Esophagus muscularis mucosa (tissue), 4 donors: ENCODE measurements at regions of chrX and their contacts with region 1.

Region 1: DNA sequence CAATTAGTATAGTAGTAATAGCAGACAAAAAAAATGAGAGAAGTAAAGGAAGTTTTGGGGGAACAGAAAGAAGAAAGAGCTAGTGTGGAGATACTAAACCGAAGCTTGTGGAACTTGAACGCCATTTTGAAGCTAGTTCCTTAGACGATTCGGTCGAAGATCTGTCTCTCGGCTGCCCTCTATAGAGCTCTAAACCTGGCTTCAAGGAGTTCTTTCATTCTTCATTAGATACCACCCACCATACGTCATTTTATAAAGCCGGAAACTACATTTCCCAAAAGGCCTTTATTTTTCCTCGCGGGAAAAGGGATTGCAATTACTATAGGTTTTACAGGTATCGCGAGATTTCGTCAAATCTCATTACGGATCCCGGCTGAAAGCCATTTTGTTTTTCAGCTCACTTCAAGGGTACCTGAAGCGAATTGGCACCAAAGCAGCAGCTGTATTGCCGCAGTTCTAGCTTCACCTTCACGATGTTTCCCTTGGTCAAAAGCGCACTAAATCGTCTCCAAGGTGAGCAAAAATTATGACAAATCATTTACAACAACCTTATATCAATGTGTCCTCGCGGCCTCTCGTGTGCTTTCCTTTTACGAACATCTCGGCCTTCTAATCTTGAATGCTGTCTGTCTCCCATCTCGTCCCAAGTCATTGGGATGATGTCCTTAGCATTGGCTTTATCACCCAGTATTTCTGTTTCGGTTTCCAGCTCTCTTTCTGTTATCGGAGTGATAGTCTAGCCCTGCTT is at the start of gene COX7B:
- DNase-seq: peak; percentile 91
- H3K4me3 ChIP-seq: peak within 1 kb of the TSS; percentile 57 to 71 (median 60)
- H3K27ac ChIP-seq: peak within 1 kb of the TSS; percentile 84 to 87 (median 86)
- H3K4me1 ChIP-seq: peaks cover 0 to 29% (median 18%) of the 10 kb centered on the region in 4 donors
- H3K27me3 ChIP-seq: no peaks in the 10 kb centered on the region
- CTCF ChIP-seq: peak in 2 of 3 experiments; percentile 36 to 44
- EP300 ChIP-seq: no peak
- POLR2A ChIP-seq: peak; percentile 48
- total RNA-seq, gene COX7B: 247 to 1,033 (median 401) TPM

Region 2: DNA sequence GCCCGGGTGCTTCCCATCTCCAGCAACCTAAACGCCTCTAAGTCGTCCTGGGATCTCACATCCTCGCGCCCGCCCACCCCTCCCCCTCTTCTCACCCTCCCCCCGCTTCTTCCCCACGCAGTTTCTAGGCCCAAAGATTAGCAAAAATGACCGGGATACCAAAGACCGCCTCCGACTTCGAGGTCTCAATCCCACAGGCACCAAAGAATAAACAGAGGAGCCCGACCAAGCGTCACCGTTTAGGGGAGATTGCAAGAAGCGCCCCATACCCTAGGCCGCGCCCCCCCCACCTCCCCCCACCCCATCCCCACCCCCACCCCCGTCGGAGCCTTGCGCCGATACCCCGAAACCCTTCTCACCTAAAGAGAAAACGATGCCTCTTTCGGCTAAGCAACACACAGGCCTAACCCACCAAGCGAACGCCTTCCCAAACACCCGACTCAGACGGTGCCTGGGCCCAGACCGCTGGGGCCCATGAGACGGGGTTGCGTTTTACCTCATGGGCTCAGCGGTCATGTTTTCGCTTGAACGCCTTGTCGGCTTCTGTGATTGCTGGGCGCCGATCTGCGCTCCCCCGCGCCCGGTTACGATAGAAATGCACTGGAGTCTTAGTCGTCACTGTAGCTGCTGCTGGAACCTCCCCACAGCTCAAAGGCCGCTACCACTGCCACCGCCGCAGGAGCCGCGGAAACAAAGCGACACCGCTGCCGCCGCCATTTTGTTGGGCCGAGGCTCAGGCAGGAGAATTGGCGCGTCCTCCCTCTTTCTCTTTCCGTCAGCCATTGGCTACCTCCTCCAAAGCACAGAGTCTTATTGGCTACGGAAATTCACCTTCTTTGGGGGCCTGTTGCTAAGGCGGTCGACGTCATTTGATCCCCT is 113.5 kb before region 1 on chrX and contains the start of gene ATRX:
- intact Hi-C with region 1: loop called (anchors 10 kb)
- DNase-seq: no peak
- H3K4me3 ChIP-seq: peak within 1 kb of the TSS; percentile 57 to 77 (median 68)
- H3K27ac ChIP-seq: peak within 1 kb of the TSS; percentile 84 to 92 (median 86)
- H3K4me1 ChIP-seq: peaks cover 0 to 25% (median 17%) of the 10 kb centered on the region in 4 donors
- H3K27me3 ChIP-seq: no peaks in the 10 kb centered on the region
- CTCF ChIP-seq: no peak
- EP300 ChIP-seq: no peak
- POLR2A ChIP-seq: no peak
- total RNA-seq, gene ATRX: 71.1 to 105 (median 95.8) TPM